Naive thymus-derived CD8-positive, alpha-beta T cell (primary cell): ENCODE measurements at regions of chr22 and their contacts with region 1.

Region 1: GRCh38 chr22:41800348-41801146 is at the start of gene CCDC134:
- DNase-seq: peak; percentile 84 to 95 (median 90)
- ATAC-seq: peak; percentile 94 to 98
- H3K4me3 Mint-ChIP-seq: peak within 1 kb of the TSS; percentile 88 to 99 (median 96)
- H3K27ac Mint-ChIP-seq: peak within 1 kb of the TSS; percentile 95 to 100 (median 99)
- H3K4me1 Mint-ChIP-seq: peaks cover 16 to 54% (median 40%) of the 10 kb centered on the region in 4 donors
- H3K27me3 Mint-ChIP-seq: no peaks in the 10 kb centered on the region
- polyA plus RNA-seq, gene CCDC134: 3.5 to 5.6 (median 3.8) TPM

Region 2: GRCh38 chr22:41688365-41689211 is 112.0 kb before region 1 on chr22 and contains the start of gene SNU13:
- POLR2A ChIA-PET with region 1: interaction called, 14 read pairs
- DNase-seq: peak; percentile 85 to 95 (median 91)
- ATAC-seq: peak; percentile 96
- H3K4me3 Mint-ChIP-seq: peak within 1 kb of the TSS; percentile 92 to 99 (median 96)
- H3K27ac Mint-ChIP-seq: peak within 1 kb of the TSS; percentile 97 to 99 (median 99)
- H3K4me1 Mint-ChIP-seq: peaks cover 14 to 35% (median 30%) of the 10 kb centered on the region in 4 donors
- H3K27me3 Mint-ChIP-seq: no peaks in the 10 kb centered on the region
- polyA plus RNA-seq, gene SNU13: 226 to 309 (median 285) TPM

Region 3: DNA sequence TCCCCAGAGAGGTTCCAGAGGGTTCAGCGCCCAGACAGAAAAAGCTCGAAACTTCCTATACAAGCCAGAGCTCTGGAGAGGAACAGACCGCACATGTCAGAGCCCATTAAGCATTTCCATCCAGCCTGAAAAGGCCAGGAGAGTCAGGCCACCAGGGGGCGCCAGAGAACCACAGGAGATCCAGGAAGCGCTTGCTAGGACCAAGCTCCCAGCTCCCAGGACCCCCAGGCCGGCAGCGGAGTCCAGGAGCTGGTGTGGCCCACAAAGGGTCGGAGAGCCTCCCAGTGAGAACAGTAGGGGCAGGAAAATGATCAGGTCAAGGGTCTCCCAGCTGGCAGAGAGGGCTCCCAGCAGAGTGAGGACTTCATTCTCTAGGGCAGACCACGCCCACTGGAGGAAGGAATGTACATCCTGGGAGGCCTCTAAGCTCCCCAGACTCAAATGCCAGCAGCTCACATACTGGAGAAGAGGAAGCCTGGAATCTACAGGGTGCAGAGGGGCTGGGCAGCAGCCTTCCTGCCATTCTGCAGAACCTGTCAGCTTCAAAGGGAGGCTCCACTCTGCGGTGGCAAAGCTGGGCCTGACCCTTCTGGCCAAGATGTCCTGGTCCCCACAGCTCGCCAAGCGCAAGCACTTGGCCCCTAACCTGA is 103.3 kb before region 1 on chr22:
- POLR2A ChIA-PET with region 1: interaction called, 30 read pairs
- DNase-seq: peak; percentile 70 to 95 (median 85)
- ATAC-seq: peak; percentile 72 to 79
- H3K4me3 Mint-ChIP-seq: peak overlapping the region; percentile 40 to 84 (median 74)
- H3K27ac Mint-ChIP-seq: peak overlapping the region in 9 of 10 donors; percentile 61 to 93 (median 81)
- H3K4me1 Mint-ChIP-seq: peaks cover 11 to 13% (median 12%) of the 10 kb centered on the region in 4 donors
- H3K27me3 Mint-ChIP-seq: peaks cover 0 to 2% (median 0%) of the 10 kb centered on the region in 5 donors

Region 4: GRCh38 chr22:41746567-41747400 is 53.8 kb before region 1 on chr22:
- POLR2A ChIA-PET with region 1: interaction called, 22 read pairs
- DNase-seq: peak; percentile 16 to 77 (median 50)
- ATAC-seq: peak; percentile 81 to 98
- H3K4me3 Mint-ChIP-seq: no peak overlapping the region
- H3K27ac Mint-ChIP-seq: peak overlapping the region in 1 of 10 donors; percentile 6
- H3K4me1 Mint-ChIP-seq: peaks cover 0 to 13% (median 4%) of the 10 kb centered on the region in 4 donors
- H3K27me3 Mint-ChIP-seq: peaks cover 2 to 14% (median 10%) of the 10 kb centered on the region in 5 donors

Region 5: DNA sequence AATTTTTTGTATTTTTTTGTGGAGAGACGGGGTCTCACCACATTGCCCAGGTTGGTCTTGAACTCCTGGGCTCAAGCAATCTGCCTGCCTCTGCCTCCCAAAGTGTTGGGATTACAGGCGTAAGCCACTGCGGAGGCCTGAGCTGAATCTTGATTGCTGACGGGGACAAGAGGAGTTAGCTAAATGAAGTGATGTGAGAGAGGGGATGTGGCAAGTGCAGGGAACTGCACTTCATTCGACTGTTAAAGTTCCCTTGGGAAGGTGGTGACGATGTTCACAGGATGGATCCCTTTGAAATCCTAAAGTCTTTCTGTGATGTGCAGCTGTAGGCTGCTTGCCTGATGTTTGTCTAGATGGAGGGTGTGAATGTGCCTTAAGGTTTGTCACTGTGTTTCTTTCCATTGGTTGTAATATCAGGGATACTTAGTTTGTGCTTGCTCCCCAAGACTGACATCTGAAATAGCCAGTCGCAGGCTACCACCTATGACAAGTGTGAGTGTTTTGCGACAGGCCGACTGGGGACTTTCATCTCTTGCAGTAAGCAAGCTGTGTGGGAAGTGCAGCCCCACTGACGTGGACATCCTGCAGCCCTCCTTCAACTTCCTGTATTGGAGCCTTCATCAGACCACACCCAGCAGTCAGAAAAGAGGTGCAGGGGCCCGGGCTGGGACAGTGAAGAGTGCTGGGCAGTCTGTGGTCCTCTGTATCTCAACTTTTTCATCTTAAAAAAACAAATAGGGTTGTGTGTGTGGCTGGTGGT is 19.6 kb before region 1 on chr22:
- POLR2A ChIA-PET with region 1: interaction called, 323 read pairs
- DNase-seq: peak; percentile 69 to 98 (median 92)
- ATAC-seq: peak; percentile 95
- H3K4me3 Mint-ChIP-seq: peak overlapping the region; percentile 80 to 93 (median 87)
- H3K27ac Mint-ChIP-seq: peak overlapping the region; percentile 98 to 100 (median 99)
- H3K4me1 Mint-ChIP-seq: peaks cover 29 to 69% (median 56%) of the 10 kb centered on the region in 4 donors
- H3K27me3 Mint-ChIP-seq: no peaks in the 10 kb centered on the region

Region 6: GRCh38 chr22:41786418-41786817 is 14.1 kb before region 1 on chr22:
- POLR2A ChIA-PET with region 1: interaction called, 323 read pairs
- DNase-seq: no peak
- ATAC-seq: no peak
- H3K4me3 Mint-ChIP-seq: no peak overlapping the region
- H3K27ac Mint-ChIP-seq: peak overlapping the region in 6 of 10 donors; percentile 34 to 86 (median 76)
- H3K4me1 Mint-ChIP-seq: peaks cover 23 to 67% (median 47%) of the 10 kb centered on the region in 4 donors
- H3K27me3 Mint-ChIP-seq: no peaks in the 10 kb centered on the region

Region 7: DNA sequence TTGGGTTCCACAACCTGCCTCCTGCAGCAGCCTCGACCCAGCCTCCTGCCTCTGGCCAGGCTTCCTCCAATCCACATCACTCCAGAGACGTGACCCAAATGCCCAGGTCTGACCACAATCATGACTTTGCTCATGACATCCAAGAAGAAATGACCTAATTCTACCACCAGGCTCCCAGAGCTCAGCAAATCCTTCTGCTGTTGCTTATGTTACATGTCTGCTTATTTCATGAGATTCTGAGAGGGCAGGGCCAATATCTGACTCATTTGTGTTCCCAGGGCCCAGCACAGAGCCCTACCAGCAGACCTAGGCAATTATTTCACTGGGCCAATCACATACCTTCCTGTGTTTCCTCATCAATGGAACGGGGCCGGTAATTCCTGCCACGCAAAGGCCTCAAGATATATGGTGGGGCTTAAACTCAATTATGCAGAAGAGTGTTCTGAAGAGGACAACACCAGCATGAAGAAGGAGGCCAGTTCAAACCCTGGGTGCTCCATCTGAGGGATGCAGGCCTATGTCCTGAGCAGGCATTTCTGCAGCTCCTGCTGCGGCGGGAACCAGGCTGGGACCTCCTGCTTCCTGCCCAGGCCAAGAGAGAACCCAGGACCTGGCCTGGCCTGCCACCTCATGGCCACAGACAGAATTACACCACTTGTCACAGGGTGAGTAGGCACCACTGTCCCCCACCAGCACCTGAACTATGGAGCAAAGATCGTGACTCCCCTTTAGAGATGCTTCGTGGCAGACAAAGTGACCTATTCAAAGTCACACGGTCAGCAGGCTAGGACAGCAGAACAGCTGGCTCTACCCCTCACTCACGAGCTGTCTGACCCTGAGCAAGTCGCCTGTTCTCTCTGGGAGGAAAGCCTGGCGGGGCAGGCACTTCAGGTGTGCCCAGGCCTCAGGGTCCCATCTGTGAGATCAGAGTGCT is 140.6 kb after region 1 on chr22:
- POLR2A ChIA-PET with region 1: interaction called, 13 read pairs
- DNase-seq: peak; percentile 76 to 93 (median 85)
- ATAC-seq: peak; percentile 63
- H3K4me3 Mint-ChIP-seq: peak overlapping the region; percentile 43 to 92 (median 76)
- H3K27ac Mint-ChIP-seq: peak overlapping the region; percentile 97 to 100 (median 100)
- H3K4me1 Mint-ChIP-seq: peaks cover 17 to 55% (median 33%) of the 10 kb centered on the region in 4 donors
- H3K27me3 Mint-ChIP-seq: no peaks in the 10 kb centered on the region

Region 8: GRCh38 chr22:42134100-42135020 is 333.8 kb after region 1 on chr22:
- POLR2A ChIA-PET with region 1: no interaction called
- DNase-seq: no peak
- ATAC-seq: no peak
- H3K4me3 Mint-ChIP-seq: peak overlapping the region in 1 of 10 donors; percentile 24
- H3K27ac Mint-ChIP-seq: peak overlapping the region in 2 of 10 donors; percentile 55 to 65
- H3K4me1 Mint-ChIP-seq: peaks cover 0 to 4% (median 3%) of the 10 kb centered on the region in 4 donors
- H3K27me3 Mint-ChIP-seq: no peaks in the 10 kb centered on the region